Heart right ventricle (tissue), 16 donors: ENCODE measurements at regions of chr12 and their contacts with region 1.

Region 1: DNA sequence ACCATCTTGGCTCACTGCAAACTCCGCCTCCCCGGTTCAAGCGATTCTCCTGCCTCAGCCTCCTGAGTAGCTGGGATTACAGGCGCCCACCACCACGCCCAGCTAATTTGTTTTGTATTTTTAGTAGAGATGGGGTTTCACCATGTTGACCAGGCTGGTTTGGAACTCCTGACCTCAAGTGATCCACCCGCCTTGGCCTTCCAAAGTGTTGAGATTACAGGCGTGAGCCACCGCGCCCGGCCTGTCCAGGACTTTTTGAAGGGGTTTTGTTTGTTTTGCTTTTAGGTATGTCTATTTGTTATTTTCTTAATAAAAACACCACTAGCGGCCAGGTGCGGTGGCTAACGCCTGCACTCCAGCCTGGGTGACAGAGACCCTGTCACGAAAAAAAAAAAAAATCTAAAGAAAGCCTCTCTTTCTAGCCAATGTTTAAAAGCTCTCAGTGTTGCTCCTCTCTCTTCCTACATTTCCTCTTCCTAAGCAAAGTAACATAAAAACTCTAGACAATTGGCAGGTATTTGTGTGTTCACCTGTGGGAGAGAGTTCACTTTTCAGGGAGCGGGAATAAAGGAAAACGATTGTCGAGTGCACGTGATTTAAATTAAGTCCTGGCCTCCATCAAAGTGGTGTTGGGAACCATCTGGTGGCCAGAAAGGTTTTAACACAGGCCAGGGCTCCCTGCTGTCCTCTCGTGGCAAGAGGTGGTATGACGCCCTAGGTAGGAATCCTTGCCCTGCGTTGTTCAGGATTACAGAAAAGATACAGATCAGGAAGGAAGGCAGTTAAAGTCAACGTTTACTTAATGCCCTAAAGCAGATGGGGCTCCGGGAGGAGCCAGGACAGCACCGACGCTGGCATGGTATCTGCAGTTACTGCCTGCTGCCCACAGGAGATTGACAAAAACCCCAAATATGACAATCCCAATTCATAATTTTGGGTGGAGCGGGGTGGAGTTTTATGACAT is 36.2 kb upstream of the ATP23 start:
- DNase-seq: peak; percentile 79 to 85
- ATAC-seq: peak; percentile 90 to 94 (median 93)
- H3K4me3 ChIP-seq: peak overlapping the region in 5 of 10 donors; percentile 4 to 34 (median 27)
- H3K27ac ChIP-seq: peak overlapping the region in 1 of 10 donors; percentile 46
- H3K4me1 ChIP-seq: peaks cover 0 to 10% (median 3%) of the 10 kb centered on the region in 9 donors
- H3K27me3 ChIP-seq: peaks cover 0 to 2% (median 0%) of the 10 kb centered on the region in 7 donors
- CTCF ChIP-seq: peak; percentile 100

Region 2: GRCh38 chr12:57782608-57783465 is 122.3 kb before region 1 on chr12 and contains the start of gene TSFM:
- intact Hi-C with region 1: loop called in 5 of 10 experiments (anchors 1 to 5 kb)
- DNase-seq: peak; percentile 98 to 99
- ATAC-seq: peak; percentile 91 to 97 (median 92)
- H3K4me3 ChIP-seq: peak within 1 kb of the TSS; percentile 64 to 99 (median 90)
- H3K27ac ChIP-seq: peak within 1 kb of the TSS in 9 of 10 donors; percentile 6 to 90 (median 68)
- H3K4me1 ChIP-seq: peaks cover 0 to 38% (median 17%) of the 10 kb centered on the region in 9 donors
- H3K27me3 ChIP-seq: no peaks in the 10 kb centered on the region
- CTCF ChIP-seq: peak; percentile 86 to 96 (median 93)
- total RNA-seq, gene TSFM: 41.2 to 70.6 (median 52.6) TPM

Region 3: GRCh38 chr12:57803319-57803893 is 101.7 kb before region 1 on chr12:
- intact Hi-C with region 1: loop called in 9 of 10 experiments (anchors 1 to 10 kb)
- DNase-seq: peak; percentile 48 to 55
- ATAC-seq: peak; percentile 70 to 87 (median 80)
- H3K4me3 ChIP-seq: no peak overlapping the region
- H3K27ac ChIP-seq: peak overlapping the region in 5 of 10 donors; percentile 10 to 34 (median 17)
- H3K4me1 ChIP-seq: peaks cover 0 to 8% (median 5%) of the 10 kb centered on the region in 9 donors
- H3K27me3 ChIP-seq: no peaks in the 10 kb centered on the region
- CTCF ChIP-seq: peak; percentile 65 to 86 (median 79)

Region 4: GRCh38 chr12:57830393-57830792 is 74.7 kb before region 1 on chr12:
- intact Hi-C with region 1: loop called in 7 of 10 experiments (anchors 1 to 5 kb)
- DNase-seq: no peak
- ATAC-seq: no peak
- H3K4me3 ChIP-seq: no peak overlapping the region
- H3K27ac ChIP-seq: peak overlapping the region in 7 of 10 donors; percentile 35 to 100 (median 76)
- H3K4me1 ChIP-seq: peaks cover 29 to 97% (median 83%) of the 10 kb centered on the region in 9 donors
- H3K27me3 ChIP-seq: no peaks in the 10 kb centered on the region
- CTCF ChIP-seq: no peak

Region 5: DNA sequence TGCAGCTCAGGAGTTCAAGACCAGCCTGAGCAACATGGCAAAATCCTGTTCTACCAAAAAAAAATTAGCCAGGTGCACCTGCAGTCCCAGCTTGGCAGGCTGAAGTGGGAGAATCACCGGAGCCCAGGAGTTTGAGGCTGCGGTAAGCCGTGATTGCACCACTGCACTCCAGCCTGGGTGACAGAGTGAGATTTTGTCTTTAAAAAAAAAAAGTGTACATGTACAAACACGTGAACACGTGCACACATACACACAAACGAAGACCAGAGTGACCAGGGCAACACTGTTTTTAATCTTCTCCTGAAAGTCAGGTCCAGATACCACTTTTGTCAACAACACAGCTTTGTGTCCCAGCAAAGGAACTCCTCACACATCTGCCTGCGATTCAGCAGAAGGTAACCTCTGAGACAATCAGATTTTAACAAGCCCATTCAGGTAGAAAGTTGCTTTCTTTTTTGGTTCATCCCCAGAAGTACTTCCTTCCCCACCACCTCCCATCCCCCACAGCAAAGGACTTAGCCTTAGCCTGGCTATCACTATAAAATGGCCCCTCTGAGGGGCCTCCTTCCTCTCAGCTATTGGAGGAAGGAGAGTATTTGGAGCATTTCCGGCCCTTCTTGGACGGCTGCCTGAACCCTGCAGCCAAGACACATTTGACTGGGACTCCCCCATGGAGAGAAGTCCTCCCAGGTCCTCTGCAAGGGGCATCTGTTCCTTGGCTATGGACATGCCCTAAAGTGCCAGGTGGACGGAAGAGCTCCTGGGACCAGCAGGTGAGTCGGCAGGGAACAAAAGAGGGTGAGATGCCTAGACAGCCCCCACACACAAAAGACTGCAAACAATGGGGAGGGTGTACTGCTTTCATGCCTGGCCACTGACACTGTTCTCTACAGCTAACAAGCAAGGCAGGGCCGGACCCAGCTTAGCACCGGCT is 68.4 kb before region 1 on chr12:
- intact Hi-C with region 1: loop called in 7 of 10 experiments (anchors 1 to 5 kb)
- DNase-seq: peak; percentile 82 to 93
- ATAC-seq: peak; percentile 48 to 82 (median 74)
- H3K4me3 ChIP-seq: peak overlapping the region in 8 of 10 donors; percentile 13 to 41 (median 32)
- H3K27ac ChIP-seq: peak overlapping the region in 9 of 10 donors; percentile 49 to 100 (median 78)
- H3K4me1 ChIP-seq: peaks cover 86 to 100% (median 100%) of the 10 kb centered on the region in 9 donors
- H3K27me3 ChIP-seq: no peaks in the 10 kb centered on the region
- CTCF ChIP-seq: no peak

Region 6: GRCh38 chr12:58051378-58051777 is 146.2 kb after region 1 on chr12:
- intact Hi-C with region 1: no loop called
- DNase-seq: no peak
- ATAC-seq: no peak
- H3K4me3 ChIP-seq: no peak overlapping the region
- H3K27ac ChIP-seq: no peak overlapping the region
- H3K4me1 ChIP-seq: no peaks in the 10 kb centered on the region
- H3K27me3 ChIP-seq: no peaks in the 10 kb centered on the region
- CTCF ChIP-seq: no peak